ENCODE measurements at regions of chr12 and their contacts with region 1.

Region 1: GRCh38 chr12:26629864-26630263 is 203.1 kb downstream of the ITPR2 start:
- DNase-seq: peak; percentile 53
- H3K4me3 ChIP-seq: no peak overlapping the region
- H3K27ac ChIP-seq: peak overlapping the region; percentile 72
- H3K27me3 ChIP-seq: no peaks in the 10 kb centered on the region
- CTCF ChIP-seq: peak; percentile 75

Region 2: GRCh38 chr12:26113853-26114719 is 515.8 kb before region 1 on chr12:
- in situ Hi-C with region 1: loop called (anchors 25 kb)
- DNase-seq: peak; percentile 84
- H3K4me3 ChIP-seq: peak overlapping the region; percentile 63
- H3K27ac ChIP-seq: peak overlapping the region; percentile 84
- H3K27me3 ChIP-seq: no peaks in the 10 kb centered on the region
- CTCF ChIP-seq: peak; percentile 49

Region 3: DNA sequence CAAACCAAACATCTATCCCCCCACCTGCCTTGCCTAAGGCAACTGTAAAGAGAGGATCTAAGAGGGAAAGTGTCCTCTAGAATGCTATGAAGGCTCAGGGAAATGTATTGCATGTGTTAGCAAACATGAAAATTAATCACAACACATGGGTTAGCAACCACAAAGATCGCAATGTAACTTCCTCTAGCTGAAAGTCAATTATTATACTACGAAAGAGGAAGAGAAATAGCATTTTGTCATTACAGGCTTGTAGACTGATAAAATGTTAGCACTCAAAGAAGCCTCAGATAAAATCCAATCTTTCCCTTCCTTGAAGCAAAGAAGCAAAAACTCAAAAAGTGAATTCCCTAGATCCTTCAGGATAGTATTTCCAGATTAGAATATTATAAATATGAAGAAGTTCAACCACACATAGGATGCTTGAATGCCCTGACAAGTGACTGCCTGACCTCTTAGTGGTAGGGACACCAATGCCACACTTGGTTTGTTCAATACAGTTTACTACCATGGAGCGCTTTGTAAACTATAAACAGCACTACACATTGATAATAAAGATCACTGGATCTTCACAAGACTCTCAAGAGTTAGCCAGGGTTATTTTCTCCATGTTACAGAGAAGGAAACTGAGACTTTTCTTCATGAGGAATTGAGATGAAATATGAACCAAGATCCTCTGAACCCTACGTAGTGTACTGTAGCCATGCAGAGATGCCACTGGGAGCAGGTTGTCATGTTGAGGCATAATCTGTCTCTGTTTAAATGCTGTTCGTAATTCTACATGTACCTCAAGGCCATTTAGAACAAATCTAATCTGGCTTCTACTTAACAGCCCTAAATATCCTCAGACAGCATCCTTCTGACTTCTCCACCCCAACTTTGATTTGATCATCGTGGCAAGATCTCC is 102.4 kb after region 1 on chr12:
- in situ Hi-C with region 1: no loop called
- DNase-seq: no peak
- H3K4me3 ChIP-seq: no peak overlapping the region
- H3K27ac ChIP-seq: no peak overlapping the region
- H3K27me3 ChIP-seq: no peaks in the 10 kb centered on the region
- CTCF ChIP-seq: no peak

Region 4: GRCh38 chr12:26953447-26953846 is 323.6 kb after region 1 on chr12:
- in situ Hi-C with region 1: no loop called
- DNase-seq: no peak
- H3K4me3 ChIP-seq: no peak overlapping the region
- H3K27ac ChIP-seq: no peak overlapping the region
- H3K27me3 ChIP-seq: no peaks in the 10 kb centered on the region
- CTCF ChIP-seq: no peak

Region 5: DNA sequence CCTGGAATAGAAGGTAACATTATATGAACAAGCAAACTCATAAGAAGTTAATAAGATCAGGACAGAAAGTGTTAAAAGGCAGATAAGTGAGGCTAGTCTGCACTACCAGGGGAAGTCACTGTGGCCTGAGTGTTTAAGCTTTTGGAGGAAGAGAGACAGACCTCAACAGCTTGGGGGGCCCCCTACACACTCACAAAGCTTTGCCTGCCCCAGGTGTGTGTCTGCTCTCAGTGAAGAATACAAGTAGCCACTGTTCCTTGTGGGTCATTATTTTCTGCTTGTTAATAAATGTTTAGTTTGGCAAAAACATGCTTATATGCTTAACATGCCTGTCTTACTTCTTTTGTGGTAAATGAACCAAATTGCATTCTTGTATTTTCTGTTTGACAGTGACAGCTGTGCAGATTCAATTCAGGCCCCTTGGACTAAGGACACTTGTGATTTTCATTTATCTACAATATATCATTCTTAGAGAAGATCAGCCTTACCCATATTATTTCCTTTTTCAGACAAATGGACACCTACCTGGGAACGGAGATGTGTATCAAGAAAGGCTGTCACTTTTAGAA is 503.2 kb after region 1 on chr12:
- in situ Hi-C with region 1: no loop called
- DNase-seq: no peak
- H3K4me3 ChIP-seq: no peak overlapping the region
- H3K27ac ChIP-seq: no peak overlapping the region
- H3K27me3 ChIP-seq: no peaks in the 10 kb centered on the region
- CTCF ChIP-seq: no peak